H1 (cell line): ENCODE measurements at regions of chr1 and their contacts with region 1.

Region 1: DNA sequence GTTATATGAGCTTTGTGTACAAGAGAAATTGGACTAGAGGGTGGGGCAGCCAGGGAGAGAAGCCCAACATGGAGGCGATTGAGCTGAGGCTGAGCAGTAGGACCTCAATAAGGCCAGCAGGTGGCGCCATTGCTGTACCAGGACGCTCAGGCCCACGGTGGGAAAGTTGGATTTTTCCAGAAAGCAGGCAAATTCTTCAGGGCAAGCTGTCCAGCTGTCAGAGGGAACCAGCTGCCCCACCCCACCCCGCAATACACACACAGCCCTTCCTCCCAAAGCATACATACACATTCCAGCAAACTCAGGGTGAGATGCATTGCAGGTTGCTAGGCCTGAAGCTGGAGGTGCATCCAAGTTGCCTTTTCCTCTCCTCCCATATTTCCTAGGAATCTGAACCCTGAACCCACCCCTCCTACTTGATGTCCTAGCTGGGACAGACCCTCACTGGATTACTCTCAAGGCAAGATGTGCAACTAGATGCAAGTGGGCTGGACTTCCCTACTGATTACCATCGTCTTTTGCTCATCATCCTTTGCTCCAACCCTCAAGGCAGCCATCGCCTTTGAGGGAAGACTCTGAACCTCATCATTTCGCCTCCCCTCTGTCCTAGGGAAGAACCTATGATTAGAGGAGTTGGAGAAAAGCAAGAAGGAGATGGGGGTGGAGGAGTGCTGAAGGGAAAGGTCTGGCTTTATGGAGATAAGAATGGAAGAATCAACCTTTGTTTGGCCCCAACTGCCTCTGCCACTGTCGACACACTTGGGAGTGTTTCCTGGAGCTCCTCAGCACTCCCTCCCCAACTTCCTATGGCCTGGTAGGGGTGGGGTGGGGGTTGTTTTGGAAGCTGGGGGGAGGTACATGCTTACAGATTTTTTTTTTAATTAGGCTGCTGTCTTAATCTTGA is 25.5 kb downstream of the CD34 start:
- DNase-seq: peak in 1 of 2 experiments; percentile 70
- H3K4me3 ChIP-seq: no peak overlapping the region
- H3K27ac ChIP-seq: no peak overlapping the region
- H3K4me1 ChIP-seq: no peaks in the 10 kb centered on the region; a peak in 1 of 7 replicates
- H3K27me3 ChIP-seq: no peaks in the 10 kb centered on the region; a peak in 1 of 7 replicates
- CTCF ChIP-seq: peak; percentile 92 to 97 (median 94)
- EP300 ChIP-seq: no peak
- POLR2A ChIP-seq: no peak
- RAD21 ChIP-seq: peak; percentile 93 to 95

Region 2: GRCh38 chr1:207628776-207629175 is 256.6 kb before region 1 on chr1:
- CTCF ChIA-PET with region 1: no interaction called
- POLR2A ChIA-PET with region 1: no interaction called
- DNase-seq: no peak
- H3K4me3 ChIP-seq: no peak overlapping the region
- H3K27ac ChIP-seq: no peak overlapping the region
- H3K4me1 ChIP-seq: peaks cover 0 to 6% (median 0%) of the 10 kb centered on the region in 4 experiments; a peak in 5 of 7 replicates
- H3K27me3 ChIP-seq: no peaks in the 10 kb centered on the region
- CTCF ChIP-seq: no peak
- EP300 ChIP-seq: no peak
- POLR2A ChIP-seq: no peak
- RAD21 ChIP-seq: no peak

Region 3: GRCh38 chr1:207838156-207839082 is 47.0 kb before region 1 on chr1:
- CTCF ChIA-PET with region 1: interaction called, 113 read pairs
- POLR2A ChIA-PET with region 1: no interaction called
- DNase-seq: no peak
- H3K4me3 ChIP-seq: no peak overlapping the region
- H3K27ac ChIP-seq: no peak overlapping the region
- H3K4me1 ChIP-seq: peaks cover 0 to 3% (median 1%) of the 10 kb centered on the region in 4 experiments; a peak in 3 of 7 replicates
- H3K27me3 ChIP-seq: no peaks in the 10 kb centered on the region
- CTCF ChIP-seq: no peak
- EP300 ChIP-seq: no peak
- POLR2A ChIP-seq: no peak
- RAD21 ChIP-seq: no peak

Region 4: GRCh38 chr1:207903767-207904166 is 18.4 kb after region 1 on chr1:
- CTCF ChIA-PET with region 1: interaction called, 106 read pairs
- POLR2A ChIA-PET with region 1: no interaction called
- DNase-seq: no peak
- H3K4me3 ChIP-seq: no peak overlapping the region
- H3K27ac ChIP-seq: no peak overlapping the region
- H3K4me1 ChIP-seq: no peaks in the 10 kb centered on the region
- H3K27me3 ChIP-seq: no peaks in the 10 kb centered on the region
- CTCF ChIP-seq: no peak
- EP300 ChIP-seq: no peak
- POLR2A ChIP-seq: no peak
- RAD21 ChIP-seq: no peak

Region 5: GRCh38 chr1:207926984-207927383 is 41.6 kb after region 1 on chr1:
- CTCF ChIA-PET with region 1: interaction called, 11 read pairs
- POLR2A ChIA-PET with region 1: no interaction called
- DNase-seq: no peak
- H3K4me3 ChIP-seq: no peak overlapping the region
- H3K27ac ChIP-seq: no peak overlapping the region
- H3K4me1 ChIP-seq: peaks cover 0 to 7% (median 1%) of the 10 kb centered on the region in 4 experiments; a peak in 3 of 7 replicates
- H3K27me3 ChIP-seq: no peaks in the 10 kb centered on the region; a peak in 1 of 7 replicates
- CTCF ChIP-seq: no peak
- EP300 ChIP-seq: no peak
- POLR2A ChIP-seq: no peak
- RAD21 ChIP-seq: no peak

Region 6: GRCh38 chr1:207952617-207953542 is 67.5 kb after region 1 on chr1:
- CTCF ChIA-PET with region 1: interaction called, 223 read pairs
- POLR2A ChIA-PET with region 1: no interaction called
- DNase-seq: no peak
- H3K4me3 ChIP-seq: no peak overlapping the region
- H3K27ac ChIP-seq: no peak overlapping the region
- H3K4me1 ChIP-seq: no peaks in the 10 kb centered on the region
- H3K27me3 ChIP-seq: peaks cover 1 to 10% (median 7%) of the 10 kb centered on the region in 4 experiments; a peak in 6 of 7 replicates
- CTCF ChIP-seq: no peak
- EP300 ChIP-seq: no peak
- POLR2A ChIP-seq: no peak
- RAD21 ChIP-seq: no peak

Region 7: GRCh38 chr1:207997486-207998268 is 112.3 kb after region 1 on chr1:
- CTCF ChIA-PET with region 1: interaction called, 39 read pairs
- POLR2A ChIA-PET with region 1: no interaction called
- DNase-seq: peak in 1 of 2 experiments; percentile 72
- H3K4me3 ChIP-seq: no peak overlapping the region
- H3K27ac ChIP-seq: no peak overlapping the region
- H3K4me1 ChIP-seq: peaks cover 0 to 9% (median 6%) of the 10 kb centered on the region in 4 experiments; a peak in 6 of 7 replicates
- H3K27me3 ChIP-seq: no peaks in the 10 kb centered on the region
- CTCF ChIP-seq: peak; percentile 80 to 92 (median 87)
- EP300 ChIP-seq: no peak
- POLR2A ChIP-seq: no peak
- RAD21 ChIP-seq: peak; percentile 47 to 59

Region 8: DNA sequence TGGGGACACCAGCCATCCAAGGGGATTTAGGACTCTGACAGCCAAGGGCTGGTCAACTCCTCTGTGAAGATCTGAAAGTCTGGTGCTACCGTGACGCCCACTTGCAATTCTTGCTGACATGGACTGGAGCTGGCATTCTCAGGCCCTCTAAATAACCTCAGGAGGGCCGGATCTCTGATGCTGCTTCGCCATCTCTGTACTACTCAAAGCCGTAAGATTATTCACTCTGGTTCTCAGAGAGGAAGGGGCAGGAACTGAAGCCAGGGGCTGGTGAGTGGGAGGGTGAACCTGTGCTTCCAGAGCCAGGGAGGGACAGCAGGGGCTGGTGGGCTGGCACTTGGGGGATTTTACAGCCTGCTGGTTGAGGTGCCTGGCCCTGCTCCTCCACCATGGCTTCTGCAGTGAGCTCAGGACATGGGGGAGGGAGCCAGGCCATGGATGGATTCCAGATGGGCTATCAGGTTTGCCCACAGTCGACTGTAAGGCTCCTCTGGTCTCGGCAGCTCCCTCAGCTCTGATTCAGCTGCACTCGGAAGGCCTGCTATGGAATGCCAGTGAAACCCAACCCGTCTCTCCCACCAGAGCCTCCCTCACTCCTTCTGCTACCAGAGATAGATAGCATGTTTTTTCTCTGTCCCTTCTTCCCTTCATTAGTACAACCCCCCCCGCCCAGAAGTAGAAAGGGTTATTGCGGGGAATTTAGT is 274.3 kb after region 1 on chr1:
- CTCF ChIA-PET with region 1: no interaction called
- POLR2A ChIA-PET with region 1: no interaction called
- DNase-seq: no peak
- H3K4me3 ChIP-seq: no peak overlapping the region
- H3K27ac ChIP-seq: no peak overlapping the region
- H3K4me1 ChIP-seq: peaks cover 4 to 21% (median 16%) of the 10 kb centered on the region in 4 experiments
- H3K27me3 ChIP-seq: 0 out of 7 replicates have a peak, but pooled peaks cover 0 to 4% (median 0%) of the 10 kb centered on the region in 4 experiments
- CTCF ChIP-seq: no peak
- EP300 ChIP-seq: no peak
- POLR2A ChIP-seq: no peak
- RAD21 ChIP-seq: no peak